ENCODE measurements at regions of chr17 and their contacts with region 1.

Region 1: GRCh38 chr17:47802341-47803022 is 19.1 kb downstream of the OSBPL7 start:
- DNase-seq: peak; percentile 53 to 67 (median 65)
- ATAC-seq: peak; percentile 84
- H3K4me3 ChIP-seq: no peak overlapping the region
- H3K27ac ChIP-seq: no peak overlapping the region
- H3K4me1 ChIP-seq: no peaks in the 10 kb centered on the region
- H3K27me3 ChIP-seq: no peaks in the 10 kb centered on the region
- CTCF ChIP-seq: peak in 6 of 7 experiments; percentile 41 to 64 (median 54)
- POLR2A ChIP-seq: no peak

Region 2: GRCh38 chr17:47650525-47651522 is 151.7 kb before region 1 on chr17:
- intact Hi-C with region 1: loop called (anchors 10 kb)
- DNase-seq: peak; percentile 95 to 96 (median 96)
- ATAC-seq: peak; percentile 69
- H3K4me3 ChIP-seq: peak overlapping the region; percentile 76 to 82
- H3K27ac ChIP-seq: peak overlapping the region; percentile 81 to 95 (median 90)
- H3K4me1 ChIP-seq: peaks cover 47% of the 10 kb centered on the region
- H3K27me3 ChIP-seq: no peaks in the 10 kb centered on the region
- CTCF ChIP-seq: no peak
- POLR2A ChIP-seq: peak in 2 of 3 donors; percentile 24 to 32

Region 3: DNA sequence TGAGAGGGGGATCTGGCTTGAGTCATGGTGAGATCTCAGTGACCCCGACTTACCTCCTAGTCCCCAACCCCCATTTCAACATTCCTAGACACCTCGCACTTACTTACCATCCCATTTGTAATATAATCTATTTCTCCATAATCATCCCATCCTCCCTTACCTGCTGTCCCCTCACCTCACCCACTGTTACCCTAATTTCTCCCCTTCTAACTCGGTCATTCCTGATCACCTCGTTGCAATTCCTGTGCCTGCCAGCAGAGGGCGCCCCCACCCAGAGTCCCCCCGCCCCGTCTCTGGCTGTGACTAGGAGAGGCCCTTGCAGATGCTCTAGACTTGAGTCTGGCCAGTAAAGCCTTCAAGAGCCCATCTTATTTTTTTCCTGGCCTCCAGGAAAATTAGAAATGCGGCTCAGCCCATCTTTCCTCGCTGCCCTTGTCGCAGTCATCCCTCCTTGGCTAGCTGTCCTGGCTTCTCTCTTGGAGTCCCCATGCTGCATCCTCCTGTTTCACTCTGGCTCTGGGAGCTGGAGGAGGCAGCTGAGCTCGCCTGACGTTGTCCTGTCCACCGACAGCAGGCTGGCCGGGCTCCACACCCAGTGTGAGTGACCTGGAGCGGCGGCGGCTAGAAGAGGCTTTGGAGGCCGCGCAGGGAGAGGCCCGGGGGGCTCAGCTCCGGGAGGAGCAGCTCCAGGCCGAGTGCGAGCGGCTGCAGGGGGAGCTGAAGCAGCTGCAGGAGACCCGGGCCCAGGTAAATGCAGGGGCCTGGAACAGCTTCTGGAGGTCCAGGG is 103.5 kb before region 1 on chr17:
- intact Hi-C with region 1: loop called (anchors 10 kb)
- DNase-seq: peak; percentile 50 to 65 (median 56)
- ATAC-seq: no peak
- H3K4me3 ChIP-seq: no peak overlapping the region
- H3K27ac ChIP-seq: no peak overlapping the region
- H3K4me1 ChIP-seq: peaks cover 13% of the 10 kb centered on the region
- H3K27me3 ChIP-seq: no peaks in the 10 kb centered on the region
- CTCF ChIP-seq: peak; percentile 59 to 98 (median 90)
- POLR2A ChIP-seq: no peak

Region 4: DNA sequence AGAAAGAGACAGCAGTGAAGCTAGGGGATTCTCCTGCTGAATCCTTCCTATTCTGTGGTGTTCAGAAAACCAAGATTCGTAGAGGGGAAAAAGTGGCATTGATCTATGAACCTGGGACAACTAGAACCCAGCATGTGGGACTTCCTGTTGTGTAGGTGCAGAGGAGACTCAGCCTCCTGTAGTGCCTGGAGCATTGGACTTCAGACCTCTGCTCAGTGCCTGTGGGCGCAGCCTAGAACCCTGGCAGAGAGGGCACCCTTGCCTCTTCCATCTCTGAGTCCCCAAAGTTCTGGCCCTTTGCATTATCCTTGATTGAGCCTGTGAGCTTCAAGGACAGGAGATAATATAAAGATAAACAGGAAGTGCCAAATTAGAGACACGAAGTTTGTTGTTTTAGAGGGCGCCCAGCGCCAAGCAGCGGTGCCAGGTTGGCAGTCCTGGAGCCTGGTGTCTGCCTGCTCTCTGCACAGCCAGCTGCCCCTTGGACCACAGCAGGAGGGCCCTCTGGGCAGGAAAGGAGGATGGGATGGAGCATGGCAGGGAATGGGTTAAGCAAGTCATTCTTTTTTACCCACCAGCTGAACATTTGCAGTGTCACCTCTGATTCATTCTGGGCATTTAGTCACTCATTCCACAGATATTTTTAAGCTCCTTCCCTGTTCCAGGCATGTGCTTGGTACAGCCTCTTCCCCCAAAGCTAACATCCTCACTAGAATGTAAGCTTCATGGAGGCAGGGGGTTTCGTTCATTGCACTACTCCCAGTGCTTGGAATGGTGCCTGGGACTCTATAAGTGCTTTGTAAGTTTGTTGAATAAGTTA is 60.3 kb after region 1 on chr17:
- intact Hi-C with region 1: no loop called
- DNase-seq: no peak
- ATAC-seq: no peak
- H3K4me3 ChIP-seq: no peak overlapping the region
- H3K27ac ChIP-seq: no peak overlapping the region
- H3K4me1 ChIP-seq: no peaks in the 10 kb centered on the region
- H3K27me3 ChIP-seq: no peaks in the 10 kb centered on the region
- CTCF ChIP-seq: no peak
- POLR2A ChIP-seq: no peak

Measured in body of pancreas (tissue), 4 donors.